ENCODE measurements at regions of chr18 and their contacts with region 1.

Region 1: DNA sequence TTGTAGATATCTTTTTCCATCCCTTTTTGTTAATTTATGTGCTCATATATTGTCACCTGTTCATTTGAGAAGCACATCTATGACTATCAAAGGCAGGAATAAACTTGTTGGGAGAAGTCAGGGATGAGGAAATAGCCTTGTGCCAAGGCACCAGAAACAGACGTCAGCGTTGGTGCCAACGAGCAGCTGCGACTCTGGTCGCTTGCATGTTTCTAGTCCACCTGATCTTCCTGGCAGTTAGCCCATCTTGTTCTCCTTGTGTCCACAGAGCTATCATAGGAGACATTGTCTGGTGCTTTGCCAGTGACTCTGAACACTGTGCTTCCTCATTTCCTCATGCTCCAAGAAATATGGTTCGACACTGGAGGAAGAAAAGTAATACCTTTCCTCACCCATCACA is 374.4 kb downstream of the PTPRM start:
- DNase-seq: peak; percentile 94 to 95
- ATAC-seq: peak; percentile 97
- H3K4me3 ChIP-seq: no peak overlapping the region
- H3K27ac ChIP-seq: peak overlapping the region; percentile 65 to 82 (median 74)
- H3K4me1 ChIP-seq: peaks cover 17 to 24% of the 10 kb centered on the region in 2 donors
- H3K27me3 ChIP-seq: no peaks in the 10 kb centered on the region
- CTCF ChIP-seq: no peak
- POLR2A ChIP-seq: no peak

Region 2: DNA sequence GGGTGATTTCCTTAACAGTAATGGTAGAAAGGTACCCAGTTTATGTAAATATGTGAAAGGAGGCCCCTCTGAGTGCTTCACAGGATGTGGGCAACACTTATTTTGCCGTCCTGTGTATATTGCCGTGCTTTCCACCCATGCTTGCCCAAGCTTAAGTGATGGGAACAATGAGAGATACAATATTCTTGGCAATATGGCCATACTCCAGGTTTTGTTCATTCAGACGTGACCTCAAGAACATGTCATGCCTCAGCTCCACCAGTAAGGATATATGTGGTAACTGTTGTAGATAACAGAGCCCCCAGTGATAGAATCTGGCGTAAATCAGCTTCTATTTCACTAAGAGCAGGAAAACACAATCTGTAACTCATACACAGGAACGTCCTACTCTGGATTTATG is 55.7 kb before region 1 on chr18:
- in situ Hi-C with region 1: no loop called
- intact Hi-C with region 1: loop called (anchors 5 kb)
- DNase-seq: no peak
- ATAC-seq: no peak
- H3K4me3 ChIP-seq: no peak overlapping the region
- H3K27ac ChIP-seq: no peak overlapping the region
- H3K4me1 ChIP-seq: peaks cover 11 to 14% of the 10 kb centered on the region in 2 donors
- H3K27me3 ChIP-seq: no peaks in the 10 kb centered on the region
- CTCF ChIP-seq: no peak
- POLR2A ChIP-seq: no peak